GM12878 (cell line): ENCODE measurements at regions of chr1 and their contacts with region 1.

Region 1: DNA sequence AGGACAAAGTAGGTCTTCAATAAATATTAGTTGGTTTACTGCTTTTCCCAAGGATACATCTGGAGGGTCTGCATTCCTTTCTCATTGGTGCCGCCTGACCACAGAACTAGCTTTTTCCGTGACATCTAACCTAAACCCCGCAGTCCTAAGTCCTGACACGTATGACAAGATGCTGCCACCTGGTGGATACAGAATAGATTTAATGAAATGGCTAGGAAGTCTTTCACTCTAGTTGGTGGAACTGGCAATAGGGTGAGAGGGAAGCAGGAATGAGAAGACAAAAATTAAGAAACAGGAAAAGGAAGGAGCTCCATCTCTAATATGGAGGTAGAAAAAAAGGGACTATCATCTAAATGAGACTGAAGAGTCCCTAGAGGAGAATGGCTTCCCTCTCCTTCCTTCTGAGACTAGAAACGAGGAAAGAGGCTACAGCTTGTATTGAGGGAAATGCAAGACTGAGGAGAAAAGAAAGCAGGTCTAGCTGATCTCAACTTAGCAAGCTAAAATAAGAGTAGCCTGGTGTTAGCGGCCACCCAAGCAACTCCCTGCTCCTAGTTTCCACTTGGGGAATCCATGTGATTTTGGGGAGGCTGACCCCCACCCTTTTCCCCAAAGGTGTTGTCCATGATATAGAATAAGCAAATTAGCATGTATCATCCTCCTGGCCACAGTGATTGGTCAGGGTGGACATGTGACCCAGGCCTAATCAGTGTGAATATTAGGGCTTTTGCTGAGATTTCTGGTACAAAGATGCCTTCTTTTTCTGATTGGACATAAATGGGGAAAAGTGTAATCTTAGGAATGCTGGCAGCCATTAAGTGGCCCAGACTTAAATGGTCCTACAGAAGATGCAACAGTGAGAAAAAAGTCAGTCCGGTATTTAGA is 5.9 kb downstream of the RFX5 start:
- DNase-seq: no peak
- ATAC-seq: peak; percentile 88
- H3K4me3 ChIP-seq: no peak overlapping the region
- H3K27ac ChIP-seq: no peak overlapping the region
- H3K4me1 ChIP-seq: no peaks in the 10 kb centered on the region; the same call in 1 of the 2 replicates
- H3K27me3 ChIP-seq: no peaks in the 10 kb centered on the region
- CTCF ChIP-seq: peak; percentile 63 to 78 (median 71)
- EP300 ChIP-seq: no peak
- POLR2A ChIP-seq: no peak; the same call in 1 of the 2 replicates
- RAD21 ChIP-seq: peak; percentile 77

Region 2: DNA sequence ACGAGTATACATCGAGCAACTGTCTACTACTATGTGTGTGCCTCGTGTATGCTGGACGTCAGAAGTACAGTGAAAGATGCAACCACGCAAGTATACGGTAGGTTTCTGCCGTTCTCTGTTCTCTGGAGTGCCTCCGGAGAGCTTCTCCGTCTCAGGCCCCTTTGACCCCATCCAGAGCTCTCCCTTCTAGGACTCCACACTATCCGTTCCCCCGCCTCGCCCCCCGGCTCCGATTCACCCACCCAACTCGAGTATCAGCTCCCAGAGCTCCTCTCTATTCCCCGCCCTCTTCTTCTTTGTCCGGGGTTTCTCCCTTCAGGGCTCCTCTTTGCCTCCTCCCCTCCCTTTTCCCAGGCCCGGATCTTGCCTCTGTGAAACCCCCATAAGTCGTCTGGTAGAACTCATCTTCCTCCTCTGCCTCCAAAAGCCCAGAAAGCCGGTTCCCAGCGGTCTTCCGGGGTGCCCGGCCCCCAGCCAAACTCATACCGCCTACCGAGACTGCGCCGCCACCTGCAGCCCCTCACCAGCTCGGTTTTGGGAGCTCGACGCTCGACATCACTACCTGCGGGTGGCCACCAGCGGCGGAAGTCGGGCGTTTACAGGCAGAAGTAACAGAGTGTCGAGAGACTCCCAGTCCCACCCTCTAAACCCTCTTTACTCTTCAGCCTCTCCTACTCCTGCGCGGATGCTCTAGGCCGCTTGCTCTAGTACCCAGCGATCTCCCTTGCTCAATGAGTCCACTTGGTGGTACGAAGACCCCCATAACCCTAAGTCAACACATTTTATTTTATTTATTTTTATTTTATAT is 151.3 kb before region 1 on chr1 and contains the start of gene VPS72:
- CTCF ChIA-PET with region 1: interaction called, 18 read pairs
- POLR2A ChIA-PET with region 1: no interaction called
- RAD21 ChIA-PET with region 1: interaction called, 5 read pairs
- SMC1A ChIA-PET with region 1: no interaction called
- in situ Hi-C with region 1: loop called (anchors 5 kb)
- intact Hi-C with region 1: no loop called
- DNase-seq: peak; percentile 72
- ATAC-seq: peak; percentile 92
- H3K4me3 ChIP-seq: peak within 1 kb of the TSS; percentile 76
- H3K27ac ChIP-seq: peak within 1 kb of the TSS; percentile 87
- H3K4me1 ChIP-seq: peaks cover 4% of the 10 kb centered on the region; the same call in 1 of the 2 replicates
- H3K27me3 ChIP-seq: no peaks in the 10 kb centered on the region
- CTCF ChIP-seq: no peak
- EP300 ChIP-seq: no peak; a peak in 1 of 4 replicates
- POLR2A ChIP-seq: peak; percentile 92
- RAD21 ChIP-seq: no peak
- polyA plus RNA-seq, gene VPS72: 6.7 to 9.0 TPM

Region 3: DNA sequence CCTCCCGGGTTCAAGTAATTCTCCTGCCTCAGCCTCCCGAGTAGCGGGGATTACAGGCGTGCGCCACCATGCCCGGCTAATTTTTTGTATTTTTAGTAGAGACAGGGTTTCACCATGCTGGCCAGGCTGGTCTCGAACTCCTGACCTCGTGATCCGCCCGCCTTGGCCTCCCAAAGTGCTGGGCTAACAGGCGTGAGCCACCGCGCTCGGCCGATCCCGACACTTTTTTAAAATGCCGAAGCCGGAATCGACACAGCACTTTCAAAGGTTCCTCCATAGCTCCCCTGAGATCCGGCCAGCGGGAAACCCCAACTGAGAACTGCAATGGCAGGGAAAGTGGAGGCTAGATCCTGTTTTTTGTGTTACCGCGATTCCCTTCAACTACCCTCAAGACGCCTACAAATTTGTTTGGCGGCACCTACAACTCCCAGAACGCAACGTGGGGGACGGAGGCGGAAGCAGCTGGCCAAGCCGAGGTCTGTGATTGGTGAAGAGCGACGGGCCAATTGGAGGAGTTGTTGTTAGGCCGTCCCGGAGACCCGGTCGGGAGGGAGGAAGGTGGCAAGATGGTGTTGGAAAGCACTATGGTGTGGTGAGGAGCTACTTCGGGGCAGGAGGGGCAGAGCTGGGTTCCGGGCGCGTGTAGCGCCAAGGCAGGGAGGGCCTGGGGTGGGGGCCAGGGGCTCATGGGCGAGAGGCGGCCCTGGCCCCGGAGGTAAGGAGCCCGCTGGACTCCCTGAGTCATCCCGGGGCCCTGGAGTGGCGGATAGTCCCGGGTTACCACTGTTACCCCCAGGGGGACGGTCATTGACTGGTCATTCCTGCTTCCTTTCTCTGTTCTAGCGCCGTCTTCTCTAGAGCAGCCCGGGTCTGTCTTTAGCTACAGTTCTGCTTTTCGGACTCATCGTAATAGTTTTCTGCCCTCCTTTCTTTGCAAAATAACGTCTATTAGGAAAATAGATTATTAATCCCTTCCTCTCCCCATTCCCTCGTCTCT is 86.6 kb before region 1 on chr1 and contains the start of gene PSMD4:
- CTCF ChIA-PET with region 1: interaction called, 18 read pairs
- POLR2A ChIA-PET with region 1: interaction called, 6 read pairs
- RAD21 ChIA-PET with region 1: interaction called, 7 read pairs
- SMC1A ChIA-PET with region 1: interaction called, 4 read pairs
- in situ Hi-C with region 1: no loop called
- intact Hi-C with region 1: no loop called
- DNase-seq: peak; percentile 96
- ATAC-seq: peak; percentile 95
- H3K4me3 ChIP-seq: peak within 1 kb of the TSS; percentile 81
- H3K27ac ChIP-seq: peak within 1 kb of the TSS; percentile 87
- H3K4me1 ChIP-seq: peaks cover 2% of the 10 kb centered on the region; the same call in 1 of the 2 replicates
- H3K27me3 ChIP-seq: no peaks in the 10 kb centered on the region
- CTCF ChIP-seq: no peak
- EP300 ChIP-seq: no peak
- POLR2A ChIP-seq: peak; percentile 94
- RAD21 ChIP-seq: no peak
- polyA plus RNA-seq, gene PSMD4: 129 to 190 TPM

Region 4: GRCh38 chr1:151292207-151293030 is 48.7 kb before region 1 on chr1:
- CTCF ChIA-PET with region 1: interaction called, 40 read pairs
- POLR2A ChIA-PET with region 1: interaction called, 4 read pairs
- RAD21 ChIA-PET with region 1: interaction called, 4 read pairs
- SMC1A ChIA-PET with region 1: interaction called, 82 read pairs
- in situ Hi-C with region 1: no loop called
- intact Hi-C with region 1: no loop called
- DNase-seq: no peak
- ATAC-seq: peak; percentile 35; the same call in 2 of the 3 replicates
- H3K4me3 ChIP-seq: no peak overlapping the region
- H3K27ac ChIP-seq: no peak overlapping the region
- H3K4me1 ChIP-seq: no peaks in the 10 kb centered on the region
- H3K27me3 ChIP-seq: no peaks in the 10 kb centered on the region
- CTCF ChIP-seq: 0 out of 6 replicates have a peak, but pooled peaks of 1 of the 3 experiments have one; percentile 15
- EP300 ChIP-seq: no peak
- POLR2A ChIP-seq: peak; percentile 74
- RAD21 ChIP-seq: no peak

Region 5: GRCh38 chr1:151327223-151327902 is 13.7 kb before region 1 on chr1 and contains the start of gene PI4KB:
- CTCF ChIA-PET with region 1: interaction called, 189 read pairs
- POLR2A ChIA-PET with region 1: interaction called, 110 read pairs
- RAD21 ChIA-PET with region 1: interaction called, 37 read pairs
- SMC1A ChIA-PET with region 1: interaction called, 75 read pairs
- in situ Hi-C with region 1: no loop called
- intact Hi-C with region 1: no loop called
- DNase-seq: peak; percentile 83
- ATAC-seq: peak; percentile 93
- H3K4me3 ChIP-seq: peak within 1 kb of the TSS; percentile 74
- H3K27ac ChIP-seq: peak within 1 kb of the TSS; percentile 95
- H3K4me1 ChIP-seq: peaks cover 9% of the 10 kb centered on the region; the same call in 1 of the 2 replicates
- H3K27me3 ChIP-seq: no peaks in the 10 kb centered on the region
- CTCF ChIP-seq: no peak
- EP300 ChIP-seq: no peak
- POLR2A ChIP-seq: peak; percentile 83
- RAD21 ChIP-seq: no peak
- polyA plus RNA-seq, gene PI4KB: 3.3 to 7.2 TPM

Region 6: DNA sequence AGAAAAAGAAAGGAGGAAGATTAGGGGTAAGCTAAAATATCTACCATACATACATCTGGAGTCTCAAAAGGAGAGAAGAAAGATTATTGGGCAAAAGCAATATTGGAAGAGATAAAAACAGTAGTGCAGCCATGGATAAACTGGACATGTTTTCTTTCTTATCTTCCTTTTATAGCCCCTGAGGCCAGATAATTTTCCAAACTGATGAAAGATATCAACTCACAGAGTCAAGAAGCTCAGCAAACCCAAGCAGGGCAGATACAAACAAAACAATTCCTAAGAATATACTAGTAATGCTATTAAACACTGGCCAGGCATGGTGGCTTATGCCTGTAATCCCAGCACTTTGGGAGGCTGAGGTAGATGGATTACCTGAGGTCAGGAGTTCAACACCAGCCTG is 52.5 kb after region 1 on chr1:
- CTCF ChIA-PET with region 1: interaction called, 21 read pairs
- POLR2A ChIA-PET with region 1: interaction called, 8 read pairs
- RAD21 ChIA-PET with region 1: interaction called, 7 read pairs
- SMC1A ChIA-PET with region 1: interaction called, 18 read pairs
- in situ Hi-C with region 1: no loop called
- intact Hi-C with region 1: loop called (anchors 2 kb)
- DNase-seq: no peak
- ATAC-seq: no peak
- H3K4me3 ChIP-seq: no peak overlapping the region
- H3K27ac ChIP-seq: no peak overlapping the region
- H3K4me1 ChIP-seq: no peaks in the 10 kb centered on the region; the same call in 1 of the 2 replicates
- H3K27me3 ChIP-seq: no peaks in the 10 kb centered on the region
- CTCF ChIP-seq: no peak
- EP300 ChIP-seq: no peak
- POLR2A ChIP-seq: no peak
- RAD21 ChIP-seq: no peak

Region 7: GRCh38 chr1:151485685-151486255 is 144.7 kb after region 1 on chr1:
- CTCF ChIA-PET with region 1: no interaction called
- POLR2A ChIA-PET with region 1: no interaction called
- RAD21 ChIA-PET with region 1: no interaction called
- SMC1A ChIA-PET with region 1: no interaction called
- in situ Hi-C with region 1: no loop called
- intact Hi-C with region 1: no loop called
- DNase-seq: no peak
- ATAC-seq: no peak
- H3K4me3 ChIP-seq: no peak overlapping the region
- H3K27ac ChIP-seq: no peak overlapping the region
- H3K4me1 ChIP-seq: peaks cover 12% of the 10 kb centered on the region
- H3K27me3 ChIP-seq: no peaks in the 10 kb centered on the region
- CTCF ChIP-seq: no peak
- EP300 ChIP-seq: no peak
- POLR2A ChIP-seq: no peak
- RAD21 ChIP-seq: no peak